ENCODE measurements at regions of chr10 and their contacts with region 1.

Region 1: DNA sequence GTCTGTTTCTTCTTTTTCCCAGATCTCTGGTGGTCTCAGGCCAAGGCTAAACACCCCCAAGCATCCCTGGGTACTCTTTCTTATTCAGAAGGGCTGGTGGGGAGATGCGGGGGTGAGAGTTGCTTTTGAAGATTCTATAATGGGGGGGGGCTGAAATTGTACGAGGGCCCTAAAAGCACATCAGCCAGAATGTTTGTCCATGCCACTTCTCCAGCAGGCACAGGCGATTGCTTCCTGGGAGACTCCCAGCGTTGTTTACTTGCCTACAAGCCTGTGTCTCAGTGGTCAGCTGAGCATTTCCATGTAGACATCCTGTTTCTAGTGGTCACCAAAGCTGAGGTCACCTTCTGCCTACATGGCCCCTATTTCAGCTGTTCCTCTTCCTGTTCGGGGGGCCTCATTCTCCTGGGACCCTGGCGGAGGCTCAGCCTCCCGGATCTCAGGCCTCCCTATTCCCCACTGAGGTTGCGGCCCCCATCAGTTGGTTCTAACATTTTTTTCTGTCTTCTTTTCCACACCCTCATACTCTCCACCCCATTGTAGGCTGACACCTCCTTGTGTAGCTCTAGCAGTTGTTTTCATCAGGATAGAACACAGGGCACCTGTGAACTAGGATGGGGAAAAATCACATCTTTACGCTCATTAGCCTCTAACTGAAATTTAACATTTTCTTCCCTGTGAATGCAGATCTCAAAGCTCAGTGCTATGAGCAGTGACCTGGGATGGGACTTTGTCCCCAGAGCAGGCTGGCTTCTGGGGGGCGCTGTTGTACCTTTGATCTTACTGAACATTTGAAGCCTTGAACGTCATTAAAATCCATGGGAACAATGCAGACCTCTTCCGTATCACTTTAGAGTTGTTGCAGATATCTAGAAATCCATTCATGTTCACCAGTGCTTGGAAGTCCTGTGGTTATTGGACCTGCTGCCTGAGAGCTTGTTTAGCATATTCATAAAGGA is 286.5 kb downstream of the GLRX3 start:
- DNase-seq: peak in 1 of 2 experiments; percentile 43
- H3K4me3 ChIP-seq: no peak overlapping the region
- H3K27ac ChIP-seq: no peak overlapping the region
- H3K4me1 ChIP-seq: no peaks in the 10 kb centered on the region
- H3K27me3 ChIP-seq: no peaks in the 10 kb centered on the region; a peak in 1 of 7 replicates
- CTCF ChIP-seq: peak; percentile 14 to 33 (median 29); a peak in 3 of 4 replicates
- EP300 ChIP-seq: no peak
- POLR2A ChIP-seq: no peak
- RAD21 ChIP-seq: peak; percentile 44 to 54

Region 2: DNA sequence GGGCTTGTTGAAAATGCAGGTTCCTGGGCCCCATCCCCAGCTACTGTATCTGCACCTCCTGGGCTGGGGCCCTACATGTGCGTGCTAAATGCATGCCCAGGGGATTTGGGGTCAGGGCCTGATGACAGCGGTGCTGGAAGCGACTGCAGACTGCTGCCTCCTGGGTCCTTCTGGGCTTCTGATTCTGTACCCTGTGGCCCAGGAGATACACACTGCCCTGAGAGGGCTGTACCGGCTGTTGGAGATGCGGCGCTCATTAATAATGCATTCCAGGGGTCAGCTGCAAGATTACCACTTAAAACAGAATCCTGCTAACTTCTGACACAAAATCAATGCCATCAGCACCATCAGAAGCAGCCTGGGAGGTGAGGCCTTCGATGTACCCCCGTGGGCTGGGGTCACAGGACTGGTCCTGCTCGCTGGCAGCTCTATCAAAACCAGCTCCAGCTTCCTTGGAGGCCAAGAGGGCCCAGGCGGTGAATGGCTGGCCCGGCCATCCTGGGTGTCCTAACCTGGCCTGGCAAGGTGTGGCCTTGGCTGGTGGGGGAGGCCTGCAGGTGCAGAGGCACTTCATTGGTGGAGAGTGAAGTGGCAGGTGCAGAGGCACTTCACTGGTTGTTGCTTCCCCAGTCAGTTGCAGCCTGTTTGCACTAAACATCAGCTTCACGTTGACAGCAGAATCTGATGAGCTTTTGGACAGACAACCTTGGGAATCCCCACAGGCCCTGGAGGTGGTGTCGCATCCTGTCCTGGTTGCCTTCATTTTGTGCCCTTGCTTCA is 207.3 kb before region 1 on chr10:
- CTCF ChIA-PET with region 1: no interaction called
- POLR2A ChIA-PET with region 1: no interaction called
- DNase-seq: no peak
- H3K4me3 ChIP-seq: no peak overlapping the region
- H3K27ac ChIP-seq: no peak overlapping the region
- H3K4me1 ChIP-seq: no peaks in the 10 kb centered on the region
- H3K27me3 ChIP-seq: no peaks in the 10 kb centered on the region
- CTCF ChIP-seq: no peak
- EP300 ChIP-seq: no peak
- POLR2A ChIP-seq: no peak
- RAD21 ChIP-seq: no peak

Region 3: GRCh38 chr10:130389906-130390305 is 32.7 kb before region 1 on chr10:
- CTCF ChIA-PET with region 1: no interaction called
- POLR2A ChIA-PET with region 1: no interaction called
- DNase-seq: no peak
- H3K4me3 ChIP-seq: no peak overlapping the region
- H3K27ac ChIP-seq: no peak overlapping the region
- H3K4me1 ChIP-seq: 0 out of 7 replicates have a peak, but pooled peaks cover 0 to under 1% (median 0%) of the 10 kb centered on the region in 4 experiments
- H3K27me3 ChIP-seq: peaks cover 0 to 1% (median 0%) of the 10 kb centered on the region in 4 experiments; a peak in 2 of 7 replicates
- CTCF ChIP-seq: no peak
- EP300 ChIP-seq: no peak
- POLR2A ChIP-seq: no peak
- RAD21 ChIP-seq: no peak

Region 4: DNA sequence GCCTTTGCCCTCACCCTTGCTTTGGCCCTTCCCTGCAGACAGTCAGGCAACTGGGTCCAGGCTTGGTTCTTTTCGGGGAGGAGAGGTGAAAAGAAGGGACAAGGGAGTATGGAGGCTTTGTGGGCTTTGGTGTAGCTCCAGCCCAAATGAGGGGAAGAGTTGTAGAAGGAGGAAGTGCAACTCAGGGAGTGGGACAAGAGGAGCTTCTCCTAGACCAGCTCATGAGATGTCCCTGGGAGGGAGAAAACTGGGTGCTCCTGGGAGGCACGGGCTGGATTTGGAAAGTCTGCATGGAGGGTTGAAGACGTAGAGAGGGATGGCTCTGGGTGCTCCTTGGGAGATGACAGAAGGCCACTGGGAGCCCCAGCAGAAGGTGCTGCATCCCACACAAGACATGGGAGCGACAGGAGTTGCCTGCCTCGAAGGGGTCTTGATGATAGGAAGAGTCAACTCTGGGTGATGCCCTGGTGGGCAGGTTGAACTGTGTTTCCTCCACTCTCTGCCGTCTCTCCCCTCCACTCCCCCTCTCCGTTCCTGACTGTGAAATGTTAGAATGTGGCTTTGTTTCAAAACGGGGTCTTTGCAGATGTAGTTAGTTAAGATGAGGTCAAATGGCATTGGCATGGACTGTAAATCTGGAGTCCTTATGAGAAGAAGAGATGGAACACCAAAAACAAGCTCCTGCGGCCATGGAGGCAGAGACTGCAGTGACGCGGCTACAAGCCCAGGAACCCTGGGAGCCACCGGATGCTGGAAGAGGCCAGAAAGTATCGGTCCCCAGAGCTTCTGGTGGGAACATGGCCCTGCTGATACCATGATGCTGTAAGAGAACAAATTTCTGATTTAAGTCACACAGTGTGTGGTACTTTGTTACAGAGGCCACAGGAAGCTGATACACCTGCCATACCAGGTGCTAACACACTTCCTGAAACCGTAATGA is 12.1 kb after region 1 on chr10:
- CTCF ChIA-PET with region 1: interaction called, 13 read pairs
- POLR2A ChIA-PET with region 1: no interaction called
- DNase-seq: no peak
- H3K4me3 ChIP-seq: no peak overlapping the region
- H3K27ac ChIP-seq: no peak overlapping the region
- H3K4me1 ChIP-seq: no peaks in the 10 kb centered on the region
- H3K27me3 ChIP-seq: no peaks in the 10 kb centered on the region
- CTCF ChIP-seq: no peak
- EP300 ChIP-seq: no peak
- POLR2A ChIP-seq: no peak
- RAD21 ChIP-seq: no peak

Region 5: GRCh38 chr10:130542761-130543160 is 120.1 kb after region 1 on chr10:
- CTCF ChIA-PET with region 1: no interaction called
- POLR2A ChIA-PET with region 1: no interaction called
- DNase-seq: no peak
- H3K4me3 ChIP-seq: no peak overlapping the region
- H3K27ac ChIP-seq: no peak overlapping the region
- H3K4me1 ChIP-seq: peaks cover 0 to 5% (median 1%) of the 10 kb centered on the region in 4 experiments; a peak in 2 of 7 replicates
- H3K27me3 ChIP-seq: no peaks in the 10 kb centered on the region
- CTCF ChIP-seq: no peak
- EP300 ChIP-seq: no peak
- POLR2A ChIP-seq: no peak
- RAD21 ChIP-seq: no peak

Region 6: GRCh38 chr10:130655313-130656186 is 232.9 kb after region 1 on chr10:
- CTCF ChIA-PET with region 1: no interaction called
- POLR2A ChIA-PET with region 1: no interaction called
- DNase-seq: no peak
- H3K4me3 ChIP-seq: no peak overlapping the region
- H3K27ac ChIP-seq: no peak overlapping the region
- H3K4me1 ChIP-seq: peaks cover 0 to 6% (median 2%) of the 10 kb centered on the region in 4 experiments; a peak in 1 of 7 replicates
- H3K27me3 ChIP-seq: no peaks in the 10 kb centered on the region
- CTCF ChIP-seq: peak in 1 of 3 experiments; percentile 25; a peak in 1 of 4 replicates
- EP300 ChIP-seq: no peak
- POLR2A ChIP-seq: no peak
- RAD21 ChIP-seq: peak; percentile 10 to 36; a peak in 1 of 4 replicates

Measured in H1 (cell line).